Ovary (tissue), 10 donors: ENCODE measurements at regions of chr13 and their contacts with region 1.

Region 1: GRCh38 chr13:75876360-75877050 is 240.4 kb downstream of the LMO7 start:
- DNase-seq: peak; percentile 35 to 68 (median 57)
- H3K4me3 ChIP-seq: no peak overlapping the region
- H3K27ac ChIP-seq: no peak overlapping the region
- H3K4me1 ChIP-seq: no peaks in the 10 kb centered on the region
- H3K27me3 ChIP-seq: no peaks in the 10 kb centered on the region
- CTCF ChIP-seq: peak; percentile 72 to 81 (median 76)
- EP300 ChIP-seq: no peak
- POLR2A ChIP-seq: no peak

Region 2: DNA sequence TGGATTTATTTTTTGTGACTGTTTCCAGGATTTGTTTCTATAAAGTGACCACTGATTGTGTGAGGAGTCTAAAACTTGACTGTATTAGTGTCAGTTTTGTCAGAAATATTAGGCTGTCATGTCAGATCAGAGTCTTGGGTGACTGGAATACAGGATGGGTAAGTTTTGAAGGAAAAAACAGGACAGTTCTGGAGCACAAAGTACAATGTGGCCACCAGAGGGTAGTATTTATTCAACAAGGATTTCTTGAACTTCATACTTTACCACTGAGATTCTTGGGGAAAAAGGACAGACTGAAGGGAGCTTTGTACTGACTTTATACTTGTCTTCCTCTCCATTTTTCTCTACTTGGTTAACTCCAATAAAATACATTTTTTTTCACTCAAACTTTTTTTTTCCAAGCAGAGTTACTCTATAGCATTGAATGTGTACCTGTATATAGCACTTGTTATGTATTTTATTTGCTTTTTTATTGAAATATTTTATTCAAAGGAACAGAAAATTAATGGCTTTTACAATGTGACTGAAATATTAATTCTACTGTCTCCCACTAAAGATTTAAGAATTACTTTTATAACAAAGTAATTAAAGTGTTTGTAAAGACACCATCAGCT is 189.2 kb before region 1 on chr13:
- intact Hi-C with region 1: loop called in 2 of 4 experiments (anchors 5 to 10 kb)
- DNase-seq: no peak
- H3K4me3 ChIP-seq: no peak overlapping the region
- H3K27ac ChIP-seq: no peak overlapping the region
- H3K4me1 ChIP-seq: peaks cover 2% of the 10 kb centered on the region
- H3K27me3 ChIP-seq: no peaks in the 10 kb centered on the region
- CTCF ChIP-seq: peak in 1 of 3 donors; percentile 21
- EP300 ChIP-seq: no peak
- POLR2A ChIP-seq: no peak

Region 3: DNA sequence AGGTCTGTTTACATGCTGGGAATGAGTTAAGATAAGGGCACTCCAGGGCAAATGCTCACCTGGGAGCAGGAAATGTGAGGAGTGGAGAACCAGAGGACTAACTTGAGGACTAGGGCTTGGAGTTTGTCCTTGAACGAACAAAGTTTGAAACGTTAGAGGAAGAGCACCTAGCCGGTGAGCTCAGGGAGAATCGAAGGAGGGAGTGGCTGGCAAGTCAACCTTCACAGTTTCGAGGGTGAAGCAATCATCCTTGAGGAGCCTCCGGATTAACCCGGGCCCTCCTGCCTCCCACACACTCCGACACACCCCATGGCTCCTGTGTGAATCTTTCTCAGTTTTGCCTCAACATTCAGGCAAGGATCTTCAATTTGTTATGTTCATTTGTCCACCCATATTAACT is 181.8 kb before region 1 on chr13:
- intact Hi-C with region 1: loop called in 3 of 4 experiments (anchors 5 to 10 kb)
- DNase-seq: no peak
- H3K4me3 ChIP-seq: no peak overlapping the region
- H3K27ac ChIP-seq: no peak overlapping the region
- H3K4me1 ChIP-seq: no peaks in the 10 kb centered on the region
- H3K27me3 ChIP-seq: no peaks in the 10 kb centered on the region
- CTCF ChIP-seq: no peak
- EP300 ChIP-seq: no peak
- POLR2A ChIP-seq: no peak

Region 4: GRCh38 chr13:76461999-76462398 is 585.5 kb after region 1 on chr13:
- intact Hi-C with region 1: loop called in 1 of 4 experiments (anchors 10 kb)
- DNase-seq: no peak
- H3K4me3 ChIP-seq: no peak overlapping the region
- H3K27ac ChIP-seq: no peak overlapping the region
- H3K4me1 ChIP-seq: no peaks in the 10 kb centered on the region
- H3K27me3 ChIP-seq: no peaks in the 10 kb centered on the region
- CTCF ChIP-seq: no peak
- EP300 ChIP-seq: no peak
- POLR2A ChIP-seq: no peak

Region 5: GRCh38 chr13:76473552-76474134 is 597.1 kb after region 1 on chr13:
- intact Hi-C with region 1: loop called (anchors 5 to 10 kb)
- DNase-seq: peak; percentile 55 to 81 (median 63)
- H3K4me3 ChIP-seq: no peak overlapping the region
- H3K27ac ChIP-seq: no peak overlapping the region
- H3K4me1 ChIP-seq: no peaks in the 10 kb centered on the region
- H3K27me3 ChIP-seq: no peaks in the 10 kb centered on the region
- CTCF ChIP-seq: peak; percentile 74 to 84 (median 79)
- EP300 ChIP-seq: no peak
- POLR2A ChIP-seq: no peak

Region 6: GRCh38 chr13:76903544-76904162 is 1027.1 kb after region 1 on chr13:
- intact Hi-C with region 1: loop called (anchors 5 to 10 kb)
- DNase-seq: peak; percentile 23 to 69 (median 48)
- H3K4me3 ChIP-seq: no peak overlapping the region
- H3K27ac ChIP-seq: no peak overlapping the region
- H3K4me1 ChIP-seq: no peaks in the 10 kb centered on the region
- H3K27me3 ChIP-seq: no peaks in the 10 kb centered on the region
- CTCF ChIP-seq: peak; percentile 85 to 87 (median 86)
- EP300 ChIP-seq: no peak
- POLR2A ChIP-seq: no peak

Region 7: GRCh38 chr13:76980075-76980718 is 1103.7 kb after region 1 on chr13:
- intact Hi-C with region 1: loop called in 1 of 4 experiments (anchors 10 kb)
- DNase-seq: peak; percentile 71 to 88 (median 82)
- H3K4me3 ChIP-seq: peak overlapping the region; percentile 17
- H3K27ac ChIP-seq: no peak overlapping the region
- H3K4me1 ChIP-seq: peaks cover 2% of the 10 kb centered on the region
- H3K27me3 ChIP-seq: no peaks in the 10 kb centered on the region
- CTCF ChIP-seq: peak; percentile 69 to 89 (median 72)
- EP300 ChIP-seq: no peak
- POLR2A ChIP-seq: no peak